ENCODE measurements at regions of chr9 and their contacts with region 1.

Region 1: DNA sequence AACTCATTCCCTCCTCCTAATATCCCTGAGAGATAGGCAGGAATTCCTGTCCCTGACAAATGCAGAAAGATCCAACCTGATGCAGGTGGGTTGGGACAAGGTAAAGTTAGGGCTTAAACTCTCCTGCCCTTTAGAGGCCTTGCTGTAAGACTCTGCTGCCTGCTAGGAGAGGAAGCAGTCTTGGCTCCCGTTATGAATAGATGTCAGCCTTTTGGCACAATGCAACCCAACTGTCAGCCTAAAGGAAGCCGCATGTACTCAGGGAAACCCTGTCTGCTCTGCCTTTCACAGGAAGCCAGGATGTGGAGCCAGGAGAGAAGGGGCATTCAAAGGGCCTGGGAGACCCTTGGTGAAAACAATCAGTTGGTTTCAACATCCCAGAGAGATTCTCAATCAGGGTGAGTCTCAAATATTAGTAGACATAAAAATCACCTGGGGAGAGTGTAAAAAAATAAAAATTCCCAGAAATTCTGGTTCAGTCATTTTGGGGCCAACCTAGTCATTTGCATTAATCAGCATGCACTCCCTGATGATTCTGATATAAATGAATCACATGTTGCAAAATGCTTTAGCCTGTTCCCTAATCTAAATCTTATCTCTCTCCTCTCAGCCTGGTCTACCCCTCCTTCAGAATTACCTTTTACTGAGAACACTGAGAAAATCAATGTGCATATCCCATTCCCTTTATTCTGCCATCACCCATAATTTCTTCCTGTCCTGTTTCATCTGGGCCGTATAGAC is 136.2 kb upstream of the TRIM32 start:
- DNase-seq: no peak
- H3K4me3 Mint-ChIP-seq: no peak overlapping the region
- H3K27ac Mint-ChIP-seq: no peak overlapping the region
- H3K4me1 Mint-ChIP-seq: peaks cover 5% of the 10 kb centered on the region
- H3K27me3 Mint-ChIP-seq: no peaks in the 10 kb centered on the region

Region 2: GRCh38 chr9:116149844-116150243 is 401.0 kb before region 1 on chr9:
- CTCF ChIA-PET with region 1: no interaction called
- POLR2A ChIA-PET with region 1: no interaction called
- intact Hi-C with region 1: loop called (anchors 10 kb)
- DNase-seq: no peak
- H3K4me3 Mint-ChIP-seq: no peak overlapping the region
- H3K27ac Mint-ChIP-seq: no peak overlapping the region
- H3K4me1 Mint-ChIP-seq: peaks cover 3% of the 10 kb centered on the region
- H3K27me3 Mint-ChIP-seq: peaks cover 33% of the 10 kb centered on the region